HepG2 (cell line): ENCODE measurements at regions of chr17 and their contacts with region 1.

Region 1: DNA sequence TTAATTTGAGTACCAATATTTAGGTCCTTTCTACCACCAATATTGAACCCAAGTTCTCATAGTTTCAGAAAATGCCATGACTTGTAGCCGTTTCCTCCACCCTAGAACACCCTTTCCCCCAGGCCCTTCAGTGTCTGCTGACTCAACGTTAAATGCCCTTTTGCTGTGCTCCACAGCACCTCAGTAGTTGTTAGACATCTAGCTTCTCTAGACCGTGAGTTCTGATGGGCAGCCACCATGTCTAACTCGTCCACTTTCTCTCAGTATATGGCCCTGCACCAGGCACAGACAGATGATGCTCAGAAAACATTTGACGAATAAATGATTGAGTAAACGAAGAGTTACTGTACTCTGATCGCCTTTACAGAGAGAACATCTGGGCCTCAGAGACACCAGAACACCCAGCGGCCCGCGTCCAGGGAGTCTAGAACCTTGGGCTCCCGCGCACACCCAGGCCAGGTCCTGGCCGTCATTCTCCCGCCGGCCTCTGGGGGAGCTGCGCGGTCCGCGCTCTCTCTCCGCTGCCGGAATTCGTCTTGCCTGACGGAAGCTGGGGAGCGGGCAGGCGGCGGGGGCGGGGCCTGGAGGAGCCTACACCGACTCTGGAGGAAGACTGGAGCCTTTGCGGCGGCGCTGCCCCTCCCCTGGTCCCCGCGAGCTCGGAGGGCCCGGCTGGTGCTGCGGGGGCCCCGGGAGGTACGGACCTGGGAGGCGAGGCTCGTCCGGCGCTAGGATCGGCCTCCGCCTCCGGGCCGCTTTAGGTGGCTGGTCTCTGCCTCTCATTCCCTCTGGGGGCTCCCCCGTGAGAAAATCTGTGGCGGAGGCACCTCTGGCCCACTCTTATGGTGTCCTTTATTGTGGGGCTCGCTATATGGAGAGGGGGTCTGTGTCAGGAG is at the start of gene NKIRAS2:
- DNase-seq: peak; percentile 89
- ATAC-seq: peak; percentile 75
- H3K4me3 ChIP-seq: peak within 1 kb of the TSS; percentile 89 to 91 (median 89)
- H3K27ac ChIP-seq: peak within 1 kb of the TSS; percentile 64
- H3K4me1 ChIP-seq: peaks cover 62% of the 10 kb centered on the region
- H3K27me3 ChIP-seq: peaks cover 0 to 3% of the 10 kb centered on the region in 2 experiments; a peak in 1 of 5 replicates
- CTCF ChIP-seq: peak; percentile 99
- EP300 ChIP-seq: no peak; a peak in 1 of 4 replicates
- POLR2A ChIP-seq: peak; percentile 24 to 88; a peak in 3 of 4 replicates
- RAD21 ChIP-seq: peak; percentile 37; the same call in 1 of the 2 replicates
- total RNA-seq, gene NKIRAS2: 26.8 and 27.9 TPM in 2 replicates

Region 2: DNA sequence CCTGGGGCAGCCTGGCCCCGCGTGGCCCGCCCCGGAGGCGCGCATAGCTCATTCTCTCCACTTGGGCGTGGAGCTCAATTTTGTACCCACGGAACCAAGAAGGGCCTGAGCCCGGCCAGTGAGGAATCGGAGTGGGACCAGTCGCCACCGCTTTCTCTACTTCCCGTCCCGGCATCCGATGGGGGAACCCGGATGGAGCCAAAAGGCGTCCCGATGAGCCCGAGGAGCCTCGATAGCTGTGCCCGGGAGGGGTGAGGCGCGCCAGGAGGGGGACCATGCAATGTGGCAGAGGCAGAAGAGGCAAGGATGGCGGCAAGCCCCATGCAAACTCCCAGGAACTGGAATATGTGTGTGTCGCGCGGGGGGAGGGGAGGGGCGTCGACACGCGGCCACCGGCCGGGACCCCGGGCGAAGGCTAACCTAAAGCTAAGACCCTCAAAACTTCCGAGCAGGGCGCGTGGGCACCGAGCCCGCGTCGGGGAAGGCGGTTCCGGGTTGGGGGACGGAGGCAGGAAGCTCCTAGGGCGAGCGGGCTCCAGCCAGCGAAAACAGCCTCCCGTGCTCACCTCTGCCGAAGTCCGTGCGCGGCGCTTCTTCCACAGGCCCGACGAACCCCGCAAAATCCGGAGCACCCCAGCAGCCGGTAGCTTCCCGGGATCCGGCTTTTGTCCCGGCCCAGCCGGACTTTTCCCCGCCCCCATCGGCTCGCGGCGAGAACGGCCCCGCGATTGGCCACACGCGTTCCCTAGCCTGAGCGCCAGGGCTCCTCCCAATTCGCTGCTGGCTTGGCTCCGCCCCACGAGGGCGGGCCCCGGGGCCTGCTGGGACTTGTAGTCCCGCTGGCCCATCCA is 101.2 kb before region 1 on chr17 and contains the start of gene ACLY:
- CTCF ChIA-PET with region 1: no interaction called
- POLR2A ChIA-PET with region 1: interaction called, 10 read pairs
- in situ Hi-C with region 1: no loop called
- intact Hi-C with region 1: no loop called
- DNase-seq: peak; percentile 97
- ATAC-seq: peak; percentile 93
- H3K4me3 ChIP-seq: peak within 1 kb of the TSS; percentile 96 to 98 (median 97)
- H3K27ac ChIP-seq: peak within 1 kb of the TSS; percentile 81
- H3K4me1 ChIP-seq: peaks cover 71% of the 10 kb centered on the region
- H3K27me3 ChIP-seq: no peaks in the 10 kb centered on the region; a peak in 1 of 5 replicates
- CTCF ChIP-seq: no peak
- EP300 ChIP-seq: 0 out of 4 replicates have a peak, but pooled peaks of 1 of the 2 experiments have one; percentile 45
- POLR2A ChIP-seq: peak; percentile 88 to 97
- RAD21 ChIP-seq: no peak; the same call in none of the 2 replicates
- total RNA-seq, gene ACLY: 218 and 277 TPM in 2 replicates

Region 3: DNA sequence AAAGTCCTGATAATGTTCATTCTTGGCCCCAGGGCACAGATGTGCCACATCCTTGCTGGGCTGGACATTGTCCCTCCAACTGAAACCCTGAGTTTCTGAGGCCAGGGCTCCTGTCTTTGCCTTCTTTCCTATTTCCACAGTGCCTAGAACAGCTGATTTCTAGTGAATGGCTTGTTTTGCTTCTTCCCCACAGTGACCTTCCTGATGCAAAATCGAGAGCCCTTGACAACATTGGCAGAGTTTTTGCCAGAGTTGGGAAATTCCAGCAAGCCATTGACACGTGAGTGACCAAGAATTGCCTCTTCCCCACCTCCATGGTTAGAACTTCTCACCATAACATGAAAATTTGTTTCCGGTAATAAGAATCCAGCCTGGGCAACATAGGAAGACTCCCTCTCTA is 74.8 kb before region 1 on chr17:
- CTCF ChIA-PET with region 1: no interaction called
- POLR2A ChIA-PET with region 1: no interaction called
- in situ Hi-C with region 1: no loop called
- intact Hi-C with region 1: no loop called
- DNase-seq: no peak
- ATAC-seq: no peak
- H3K4me3 ChIP-seq: no peak overlapping the region
- H3K27ac ChIP-seq: no peak overlapping the region
- H3K4me1 ChIP-seq: peaks cover 58% of the 10 kb centered on the region
- H3K27me3 ChIP-seq: no peaks in the 10 kb centered on the region
- CTCF ChIP-seq: no peak
- EP300 ChIP-seq: no peak
- POLR2A ChIP-seq: no peak
- RAD21 ChIP-seq: no peak

Region 4: DNA sequence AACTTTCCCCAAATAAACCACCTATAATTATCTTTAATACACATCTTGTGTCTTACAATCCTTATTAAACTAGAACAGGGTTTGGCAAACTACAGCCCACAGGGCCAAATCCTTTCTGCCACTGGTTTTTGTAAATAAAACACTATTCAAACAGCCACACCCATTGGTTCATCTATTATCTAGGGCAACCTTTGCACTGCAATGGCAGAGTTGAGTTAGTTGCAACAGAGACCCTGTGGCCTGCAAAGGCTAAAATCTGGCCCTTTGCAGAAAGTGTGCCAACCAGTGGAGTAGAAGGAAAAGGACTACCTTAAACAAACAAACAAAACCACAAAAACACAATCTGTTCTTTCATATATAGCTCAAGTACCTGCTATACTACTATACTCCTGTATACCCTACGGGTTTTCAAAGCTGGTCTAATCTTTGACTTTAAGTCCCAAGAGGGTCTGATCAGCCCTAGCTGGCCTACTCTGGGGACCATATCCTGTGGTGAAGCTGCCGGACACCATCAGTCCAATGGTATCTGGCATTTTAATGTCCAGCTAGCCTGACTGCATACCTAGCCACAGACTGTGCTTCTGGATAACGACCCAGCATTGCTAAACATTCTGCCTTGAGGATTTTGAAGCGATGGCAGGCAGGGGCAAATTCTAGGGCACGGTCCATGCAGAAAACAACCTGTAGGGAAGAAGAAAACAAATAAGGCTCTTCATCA is 29.9 kb before region 1 on chr17:
- CTCF ChIA-PET with region 1: interaction called, 4 read pairs
- POLR2A ChIA-PET with region 1: interaction called, 30 read pairs
- in situ Hi-C with region 1: no loop called
- intact Hi-C with region 1: no loop called
- DNase-seq: peak; percentile 94
- ATAC-seq: peak; percentile 97
- H3K4me3 ChIP-seq: no peak overlapping the region
- H3K27ac ChIP-seq: peak overlapping the region; percentile 57
- H3K4me1 ChIP-seq: peaks cover 36% of the 10 kb centered on the region
- H3K27me3 ChIP-seq: no peaks in the 10 kb centered on the region
- CTCF ChIP-seq: peak; percentile 33
- EP300 ChIP-seq: peak in 1 of 2 experiments; percentile 73; a peak in 2 of 4 replicates
- POLR2A ChIP-seq: no peak
- RAD21 ChIP-seq: peak; percentile 35; the same call in 1 of the 2 replicates

Region 5: DNA sequence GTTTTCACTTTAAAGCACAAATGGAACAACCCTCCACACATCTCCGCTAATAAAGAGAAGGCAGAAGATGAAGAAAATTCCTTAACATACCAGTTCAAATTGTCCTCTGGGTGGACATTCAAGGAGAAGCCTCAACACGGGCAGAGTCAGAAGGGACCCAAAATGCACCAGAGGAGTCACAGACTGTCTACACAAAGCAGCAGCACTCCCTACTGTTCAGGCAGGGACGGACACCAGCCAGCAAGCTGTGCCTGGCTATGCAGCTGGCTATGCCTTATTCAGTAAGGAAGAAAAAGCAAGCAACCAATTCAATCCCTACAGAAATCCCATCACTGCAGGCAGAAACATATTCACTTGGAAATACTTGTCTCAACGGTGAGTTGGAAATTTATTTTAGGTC is 10.6 kb before region 1 on chr17:
- CTCF ChIA-PET with region 1: no interaction called
- POLR2A ChIA-PET with region 1: interaction called, 183 read pairs
- in situ Hi-C with region 1: no loop called
- intact Hi-C with region 1: no loop called
- DNase-seq: peak; percentile 33
- ATAC-seq: peak; percentile 90
- H3K4me3 ChIP-seq: no peak overlapping the region
- H3K27ac ChIP-seq: no peak overlapping the region
- H3K4me1 ChIP-seq: peaks cover 68% of the 10 kb centered on the region
- H3K27me3 ChIP-seq: no peaks in the 10 kb centered on the region
- CTCF ChIP-seq: peak; percentile 61
- EP300 ChIP-seq: no peak
- POLR2A ChIP-seq: no peak
- RAD21 ChIP-seq: peak; percentile 27; the same call in 1 of the 2 replicates

Region 6: GRCh38 chr17:42101513-42102319 is 82.0 kb after region 1 on chr17:
- CTCF ChIA-PET with region 1: interaction called, 16 read pairs
- POLR2A ChIA-PET with region 1: no interaction called
- in situ Hi-C with region 1: no loop called
- intact Hi-C with region 1: no loop called
- DNase-seq: peak; percentile 65
- ATAC-seq: peak; percentile 79
- H3K4me3 ChIP-seq: peak overlapping the region; percentile 27 to 63 (median 27); a peak in 5 of 6 replicates
- H3K27ac ChIP-seq: no peak overlapping the region
- H3K4me1 ChIP-seq: peaks cover 38% of the 10 kb centered on the region
- H3K27me3 ChIP-seq: peaks cover 6 to 35% of the 10 kb centered on the region in 2 experiments; a peak in 4 of 5 replicates
- CTCF ChIP-seq: peak; percentile 99
- EP300 ChIP-seq: no peak
- POLR2A ChIP-seq: no peak
- RAD21 ChIP-seq: peak; percentile 97